ENCODE measurements at regions of chr9 and their contacts with region 1.

Region 1: GRCh38 chr9:34637356-34638137 is at the start of gene SIGMAR1:
- DNase-seq: peak; percentile 98
- H3K4me3 ChIP-seq: peak within 1 kb of the TSS; percentile 66 to 69
- H3K27ac ChIP-seq: peak within 1 kb of the TSS; percentile 32 to 72; a peak in 3 of 4 replicates
- H3K4me1 ChIP-seq: peaks cover 4 to 20% of the 10 kb centered on the region in 2 experiments; a peak in 1 of 4 replicates
- H3K27me3 ChIP-seq: no peaks in the 10 kb centered on the region
- CTCF ChIP-seq: no peak
- EP300 ChIP-seq: no peak; a peak in 1 of 4 replicates
- RAD21 ChIP-seq: no peak
- polyA plus RNA-seq, gene SIGMAR1: 73.7 and 79.0 TPM in 2 replicates

Region 2: DNA sequence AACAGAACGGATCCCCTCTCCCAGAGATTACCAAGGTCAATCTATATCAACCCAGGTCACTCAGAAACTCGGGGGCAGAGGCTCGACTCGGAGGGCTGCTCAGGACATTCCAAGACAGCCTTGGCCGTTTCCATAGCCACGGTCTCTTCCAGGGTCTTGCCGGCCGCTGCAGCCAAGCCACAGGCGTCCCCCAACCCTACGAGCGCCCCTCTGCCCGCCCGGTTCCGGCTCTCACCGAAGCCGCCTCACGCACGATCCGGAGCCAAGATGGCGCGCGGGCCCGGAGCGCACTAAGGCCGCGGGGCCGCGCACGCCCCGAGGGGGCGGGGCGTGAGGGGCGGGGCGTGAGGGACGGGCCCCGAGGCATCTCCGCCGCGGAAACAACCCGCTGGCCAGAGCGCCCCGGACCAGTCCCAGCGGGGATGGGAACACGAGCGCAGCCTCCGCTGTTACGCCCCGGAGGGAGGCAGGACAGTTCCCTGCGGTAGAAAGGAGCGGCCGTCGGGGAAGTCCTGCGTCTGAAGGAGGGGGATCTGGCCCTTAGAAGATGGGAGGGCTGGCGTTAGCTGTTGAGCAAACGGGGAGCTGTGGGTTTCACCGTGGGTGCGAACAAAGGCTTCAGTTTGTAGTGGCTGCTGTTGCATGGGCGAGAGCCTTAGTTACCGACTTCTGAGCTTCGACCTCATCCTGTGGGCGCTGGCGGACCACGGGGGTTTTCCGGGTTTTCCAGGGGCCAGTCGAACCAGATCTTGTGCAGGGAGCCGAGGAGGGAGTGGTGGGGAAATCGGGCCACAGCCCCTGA is 25.5 kb before region 1 on chr9 and contains the start of gene RPP25L:
- CTCF ChIA-PET with region 1: interaction called, 256 read pairs
- POLR2A ChIA-PET with region 1: interaction called, 11 read pairs
- DNase-seq: peak; percentile 93
- H3K4me3 ChIP-seq: peak within 1 kb of the TSS; percentile 66 to 84
- H3K27ac ChIP-seq: peak within 1 kb of the TSS; percentile 73 to 75
- H3K4me1 ChIP-seq: peaks cover 0 to 36% of the 10 kb centered on the region in 2 experiments; a peak in 1 of 4 replicates
- H3K27me3 ChIP-seq: no peaks in the 10 kb centered on the region
- CTCF ChIP-seq: no peak
- EP300 ChIP-seq: no peak
- RAD21 ChIP-seq: no peak
- polyA plus RNA-seq, gene RPP25L: 46.3 and 47.6 TPM in 2 replicates

Region 3: DNA sequence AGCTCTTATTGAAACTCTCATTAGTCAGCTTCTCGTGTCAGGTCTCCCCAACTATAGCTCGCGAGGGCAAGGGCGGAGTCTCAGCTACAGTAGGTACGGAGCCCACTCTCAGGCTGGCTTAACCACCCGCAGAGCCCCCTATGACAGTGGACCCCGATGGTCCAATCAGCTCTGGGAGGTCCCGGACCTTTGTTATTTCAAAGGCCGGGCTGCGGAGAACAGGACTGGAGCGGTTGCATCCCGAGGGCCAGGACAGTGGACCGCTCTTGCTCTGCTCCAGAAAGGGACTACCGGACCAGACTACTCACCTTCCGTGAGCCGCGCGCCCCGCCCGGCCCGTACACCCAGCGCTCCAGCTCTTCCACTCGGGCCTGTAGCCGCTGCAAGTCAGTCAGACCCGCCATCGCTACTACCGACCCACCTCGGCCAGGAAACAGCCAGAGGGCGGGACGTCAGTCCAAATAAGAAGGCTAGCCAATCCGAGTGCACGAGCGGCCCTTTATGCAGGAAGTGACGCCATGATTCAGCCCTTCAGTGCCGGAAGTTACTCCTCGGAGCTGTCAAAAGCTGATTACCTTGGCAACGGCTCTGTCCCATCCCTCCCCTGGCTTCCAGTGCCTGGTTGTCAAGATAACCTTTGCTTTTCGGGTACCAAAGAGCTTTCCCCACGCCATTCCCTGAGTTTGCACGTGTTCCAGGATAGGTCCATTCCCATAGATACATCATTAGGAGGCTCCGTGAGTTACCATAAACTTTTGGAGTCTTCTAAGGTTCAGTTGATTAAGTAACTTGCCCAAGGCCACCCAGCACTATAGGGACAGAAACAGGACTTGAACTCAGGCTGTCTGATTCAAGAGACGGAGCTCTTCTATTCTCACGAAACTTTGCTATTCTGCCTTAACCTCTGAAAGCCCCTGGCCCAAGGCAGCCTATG is 17.2 kb before region 1 on chr9 and contains the start of gene DCTN3:
- CTCF ChIA-PET with region 1: interaction called, 256 read pairs
- POLR2A ChIA-PET with region 1: interaction called, 11 read pairs
- DNase-seq: peak; percentile 97
- H3K4me3 ChIP-seq: peak within 1 kb of the TSS; percentile 94 to 96
- H3K27ac ChIP-seq: peak within 1 kb of the TSS in 1 of 2 experiments; percentile 13; a peak in 2 of 4 replicates
- H3K4me1 ChIP-seq: peaks cover 5 to 22% of the 10 kb centered on the region in 2 experiments; a peak in 2 of 4 replicates
- H3K27me3 ChIP-seq: no peaks in the 10 kb centered on the region
- CTCF ChIP-seq: no peak
- EP300 ChIP-seq: no peak
- RAD21 ChIP-seq: no peak
- polyA plus RNA-seq, gene DCTN3: 210 and 300 TPM in 2 replicates

Region 4: DNA sequence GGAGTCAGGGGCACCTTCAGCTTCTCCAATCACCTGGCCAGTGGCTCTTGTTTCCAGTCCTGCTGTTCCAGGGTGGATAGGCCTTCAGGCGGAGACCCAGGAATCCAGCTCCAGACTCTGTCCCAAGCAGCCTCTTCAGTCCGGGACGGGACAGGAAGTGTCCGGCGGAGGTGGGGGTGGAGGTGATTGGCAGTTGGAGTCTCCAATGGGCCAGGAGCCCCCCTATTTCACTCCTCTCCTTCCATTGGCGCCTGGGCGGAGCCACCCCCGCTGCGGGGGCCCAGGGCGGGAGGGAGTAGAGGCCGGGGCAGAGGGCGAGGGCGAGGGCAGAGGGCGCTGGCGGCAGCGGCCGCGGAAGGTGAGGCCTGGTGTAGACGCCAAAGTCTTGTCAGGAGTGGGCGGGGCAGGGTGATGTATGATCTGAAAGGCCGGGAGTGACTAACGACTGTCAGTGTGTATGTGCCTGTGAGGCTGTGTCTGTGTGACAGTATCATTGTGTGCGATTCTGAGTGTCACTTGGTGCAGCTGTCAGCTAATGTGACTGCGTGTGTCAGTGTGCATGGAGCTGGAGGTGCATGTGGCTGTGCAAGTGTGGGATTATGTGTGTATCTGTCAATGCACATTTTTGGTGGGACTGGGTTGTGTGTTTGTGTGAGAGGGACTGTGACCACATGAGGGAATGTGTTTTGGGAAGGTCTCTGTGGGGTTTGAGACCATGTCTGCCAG is 14.5 kb after region 1 on chr9 and contains the start of gene IL11RA:
- CTCF ChIA-PET with region 1: interaction called, 152 read pairs
- POLR2A ChIA-PET with region 1: interaction called, 22 read pairs
- DNase-seq: no peak
- H3K4me3 ChIP-seq: no peak within 1 kb of the TSS
- H3K27ac ChIP-seq: peak within 1 kb of the TSS; percentile 67 to 96
- H3K4me1 ChIP-seq: peaks cover 23 to 87% of the 10 kb centered on the region in 2 experiments
- H3K27me3 ChIP-seq: no peaks in the 10 kb centered on the region
- CTCF ChIP-seq: no peak
- EP300 ChIP-seq: no peak
- RAD21 ChIP-seq: no peak
- polyA plus RNA-seq, gene IL11RA: 16.5 and 20.8 TPM in 2 replicates

Region 5: GRCh38 chr9:34665381-34666250 is 28.1 kb after region 1 on chr9:
- CTCF ChIA-PET with region 1: interaction called, 10 read pairs
- POLR2A ChIA-PET with region 1: interaction called, 10 read pairs
- DNase-seq: peak; percentile 96
- H3K4me3 ChIP-seq: peak overlapping the region; percentile 89 to 100
- H3K27ac ChIP-seq: peak overlapping the region; percentile 95 to 99
- H3K4me1 ChIP-seq: peaks cover 8 to 12% of the 10 kb centered on the region in 2 experiments; a peak in 3 of 4 replicates
- H3K27me3 ChIP-seq: no peaks in the 10 kb centered on the region
- CTCF ChIP-seq: no peak
- EP300 ChIP-seq: no peak; a peak in 1 of 4 replicates
- RAD21 ChIP-seq: no peak

Region 6: DNA sequence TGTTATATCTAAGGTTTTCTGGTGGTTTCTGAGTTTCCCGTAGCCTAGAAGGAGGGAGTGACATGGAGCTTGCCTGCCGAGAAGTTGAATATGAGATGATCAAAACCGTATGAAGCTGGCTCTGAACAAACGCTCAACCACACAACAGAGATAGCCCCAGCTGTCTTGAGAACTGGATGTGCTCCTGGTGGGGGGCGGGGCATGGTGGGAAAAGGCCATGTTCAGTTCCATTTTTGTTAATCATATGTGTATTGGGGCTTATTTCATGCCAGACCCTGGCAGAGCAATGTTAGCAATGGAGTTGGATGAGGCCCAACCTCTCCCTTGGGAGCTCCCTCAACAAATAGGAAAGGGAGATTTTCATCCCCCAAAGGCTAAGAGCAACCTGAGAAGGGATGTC is 48.7 kb after region 1 on chr9:
- CTCF ChIA-PET with region 1: no interaction called
- POLR2A ChIA-PET with region 1: no interaction called
- DNase-seq: no peak
- H3K4me3 ChIP-seq: no peak overlapping the region
- H3K27ac ChIP-seq: no peak overlapping the region
- H3K4me1 ChIP-seq: no peaks in the 10 kb centered on the region; a peak in 1 of 4 replicates
- H3K27me3 ChIP-seq: no peaks in the 10 kb centered on the region
- CTCF ChIP-seq: no peak
- EP300 ChIP-seq: no peak
- RAD21 ChIP-seq: no peak